ENCODE measurements at regions of chr1 and their contacts with region 1.

Region 1: DNA sequence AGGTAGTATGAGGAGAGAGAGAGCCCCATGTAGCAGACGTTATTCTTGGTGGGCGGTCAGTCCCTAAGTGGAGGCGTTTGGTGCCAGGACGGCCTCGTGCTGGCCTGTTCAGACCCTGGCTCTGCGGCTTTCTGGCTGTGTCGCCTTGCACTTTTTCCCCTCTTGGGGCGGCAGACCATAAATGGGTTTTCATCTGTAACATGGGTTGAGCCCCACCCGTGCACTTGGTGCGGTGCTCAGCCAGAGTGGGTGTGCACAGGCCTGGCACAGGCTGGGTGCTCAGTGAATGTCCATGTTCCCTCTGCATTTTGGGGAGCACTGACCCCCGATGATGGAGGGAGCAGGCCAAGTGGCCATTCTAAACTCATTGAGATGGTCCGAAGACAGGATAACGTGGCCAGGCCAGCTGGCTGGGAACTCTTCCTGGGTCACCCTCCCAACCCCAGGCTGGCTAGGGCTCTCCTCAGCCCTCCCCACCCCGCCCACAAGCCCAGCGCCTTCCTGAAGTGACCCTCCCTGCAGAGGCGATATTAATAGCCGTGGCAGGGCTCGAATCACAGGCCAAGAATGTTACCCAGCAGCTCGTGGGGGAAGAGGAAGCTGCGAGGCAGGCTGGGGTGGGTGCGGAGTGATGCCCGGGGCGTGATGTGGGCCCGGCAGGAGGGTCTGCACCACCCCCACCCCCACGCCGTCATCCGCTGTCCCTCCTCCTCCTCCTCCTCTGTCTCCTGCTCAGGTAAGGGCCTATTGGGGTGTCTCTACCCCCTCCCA is 78.5 kb downstream of the ARHGEF10L start:
- DNase-seq: peak; percentile 88

Region 2: DNA sequence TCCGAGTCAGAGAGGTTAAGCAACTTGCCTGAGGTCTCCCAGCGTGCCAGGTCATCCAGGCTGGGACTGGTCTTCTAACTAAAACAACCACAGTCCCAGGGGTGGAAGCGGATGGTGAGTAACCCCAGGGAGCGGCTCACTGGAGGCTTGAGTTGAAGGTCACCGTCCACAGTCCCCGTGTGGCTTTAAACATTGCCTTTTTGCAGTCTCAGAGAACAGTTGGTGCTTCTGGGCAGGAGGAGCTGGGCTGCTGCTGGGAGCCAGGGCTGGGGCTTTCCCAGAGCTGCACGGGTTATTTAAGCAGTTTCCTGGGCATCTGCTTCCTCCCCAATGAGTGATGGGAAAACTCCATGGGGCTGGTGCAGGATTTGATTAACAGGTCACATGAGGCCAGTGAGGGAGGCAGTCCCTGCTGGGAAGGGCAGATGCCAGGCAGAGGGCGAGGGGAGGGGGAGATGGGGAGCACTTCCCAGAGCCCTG is 66.2 kb before region 1 on chr1:
- intact Hi-C with region 1: loop called (anchors 5 kb)
- DNase-seq: no peak

Region 3: DNA sequence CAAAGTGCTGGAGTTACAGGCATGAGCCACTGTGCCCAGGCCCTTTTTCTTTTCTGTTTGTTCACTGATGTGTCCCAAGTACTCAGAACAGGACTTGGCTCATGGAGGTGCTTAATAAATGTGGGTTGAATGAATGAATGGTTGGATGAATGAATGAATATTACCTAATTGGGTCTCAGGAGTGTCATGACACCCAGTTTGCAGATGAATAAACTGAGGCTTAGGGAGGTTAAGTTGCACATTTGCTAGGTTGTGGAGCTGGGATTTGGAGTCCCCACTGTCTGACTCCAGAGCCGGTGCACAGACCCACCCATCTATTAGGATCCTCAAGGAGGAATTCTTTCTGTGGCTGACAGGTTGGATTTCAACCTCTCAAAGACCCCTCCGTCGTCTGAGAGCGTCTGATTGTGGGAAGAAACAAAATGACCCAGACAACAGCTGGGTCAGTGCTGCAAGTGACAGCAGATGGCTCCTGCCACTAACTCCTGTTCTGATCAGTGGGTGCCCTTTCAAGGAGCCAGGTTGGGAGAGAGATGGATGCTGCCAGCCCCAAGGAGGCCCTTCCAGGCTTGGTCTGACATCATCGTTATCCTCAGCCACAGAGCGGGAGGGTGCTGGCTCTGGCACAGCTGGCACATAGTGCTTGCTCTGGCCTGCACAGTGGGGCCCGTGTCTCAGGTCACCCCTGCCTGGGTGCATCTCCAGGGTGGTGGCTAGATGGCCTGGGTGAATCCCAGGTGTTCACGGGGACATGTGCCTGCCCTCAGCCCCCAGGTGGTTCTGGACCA is 54.3 kb before region 1 on chr1:
- intact Hi-C with region 1: no loop called
- DNase-seq: no peak

Measured in cardiac septum (tissue), 1 donor.